ENCODE measurements at regions of chr2 and their contacts with region 1.

Region 1: GRCh38 chr2:173027181-173028128 is 48.2 kb upstream of the MAP3K20 start:
- DNase-seq: peak; percentile 87
- H3K4me3 ChIP-seq: no peak overlapping the region
- H3K27ac ChIP-seq: no peak overlapping the region
- H3K4me1 ChIP-seq: no peaks in the 10 kb centered on the region
- H3K27me3 ChIP-seq: peaks cover 0 to 2% of the 10 kb centered on the region in 2 experiments
- CTCF ChIP-seq: peak; percentile 73 to 85
- POLR2A ChIP-seq: no peak

Region 2: DNA sequence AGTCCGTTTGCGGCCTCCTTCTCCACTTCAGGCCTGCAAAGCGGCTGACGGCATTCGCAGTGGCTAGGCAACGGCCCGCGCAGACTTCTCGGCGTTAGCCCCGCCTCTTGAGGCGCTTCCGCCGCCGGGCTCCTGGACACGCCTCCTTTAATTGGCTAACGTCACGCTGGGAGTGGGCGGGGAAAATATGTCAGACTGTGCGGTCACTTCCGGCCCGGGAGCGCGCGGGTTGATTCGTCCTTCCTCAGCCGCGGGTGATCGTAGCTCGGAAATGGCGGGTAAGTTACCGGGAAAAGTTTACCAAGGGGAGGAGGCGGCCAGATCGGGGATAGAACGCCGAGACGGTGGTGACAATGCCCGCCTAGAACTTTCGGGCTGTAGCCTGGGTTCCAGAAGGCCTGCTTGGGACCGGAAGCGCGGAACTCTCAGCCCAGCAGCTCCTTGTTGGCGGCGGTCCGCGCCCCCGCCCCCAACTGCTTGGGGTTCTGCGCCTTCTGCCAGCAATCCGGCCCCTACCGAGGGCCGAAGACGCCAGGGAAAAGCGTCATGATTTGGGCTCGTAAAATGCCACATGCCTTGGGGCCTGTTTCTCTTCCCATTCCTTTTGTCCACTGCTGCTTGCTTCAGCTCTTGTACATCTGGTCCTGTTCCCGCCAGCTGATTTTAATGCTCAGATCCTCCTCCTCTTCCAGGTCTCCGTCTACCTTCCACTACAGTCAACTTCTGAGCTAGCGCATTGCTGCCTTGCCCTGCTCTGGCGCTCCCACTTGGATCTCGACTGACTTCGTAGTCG is 1105.0 kb before region 1 on chr2 and contains the start of gene HAT1:
- CTCF ChIA-PET with region 1: no interaction called
- POLR2A ChIA-PET with region 1: no interaction called
- dilution Hi-C with region 1: no loop called
- intact Hi-C with region 1: no loop called
- DNase-seq: peak; percentile 99
- H3K4me3 ChIP-seq: peak within 1 kb of the TSS; percentile 32 to 79 (median 57)
- H3K27ac ChIP-seq: peak within 1 kb of the TSS; percentile 77
- H3K4me1 ChIP-seq: peaks cover 13% of the 10 kb centered on the region
- H3K27me3 ChIP-seq: no peaks in the 10 kb centered on the region
- CTCF ChIP-seq: no peak
- POLR2A ChIP-seq: peak; percentile 59
- total RNA-seq, gene HAT1: 49.7 and 50.3 TPM in 2 replicates

Region 3: GRCh38 chr2:172931918-172932520 is 95.4 kb before region 1 on chr2:
- CTCF ChIA-PET with region 1: interaction called, 34 read pairs
- POLR2A ChIA-PET with region 1: no interaction called
- dilution Hi-C with region 1: no loop called
- intact Hi-C with region 1: loop called (anchors 2 kb)
- DNase-seq: peak; percentile 81
- H3K4me3 ChIP-seq: peak overlapping the region in 1 of 3 experiments; percentile 25
- H3K27ac ChIP-seq: peak overlapping the region; percentile 94
- H3K4me1 ChIP-seq: peaks cover 39% of the 10 kb centered on the region
- H3K27me3 ChIP-seq: no peaks in the 10 kb centered on the region
- CTCF ChIP-seq: peak; percentile 39 to 62
- POLR2A ChIP-seq: no peak

Region 4: GRCh38 chr2:173075781-173076580 is 48.5 kb after region 1 on chr2 and contains the start of gene MAP3K20:
- CTCF ChIA-PET with region 1: interaction called, 13 read pairs
- POLR2A ChIA-PET with region 1: no interaction called
- dilution Hi-C with region 1: no loop called
- intact Hi-C with region 1: no loop called
- DNase-seq: peak; percentile 70
- H3K4me3 ChIP-seq: peak within 1 kb of the TSS; percentile 54 to 86 (median 56)
- H3K27ac ChIP-seq: peak within 1 kb of the TSS; percentile 78
- H3K4me1 ChIP-seq: peaks cover 15% of the 10 kb centered on the region
- H3K27me3 ChIP-seq: no peaks in the 10 kb centered on the region
- CTCF ChIP-seq: peak; percentile 17 to 48
- POLR2A ChIP-seq: peak; percentile 54
- total RNA-seq, gene MAP3K20: 31.5 and 32.0 TPM in 2 replicates

Region 5: GRCh38 chr2:173157676-173158293 is 130.3 kb after region 1 on chr2:
- CTCF ChIA-PET with region 1: interaction called, 20 read pairs
- POLR2A ChIA-PET with region 1: no interaction called
- dilution Hi-C with region 1: no loop called
- intact Hi-C with region 1: no loop called
- DNase-seq: no peak
- H3K4me3 ChIP-seq: no peak overlapping the region
- H3K27ac ChIP-seq: no peak overlapping the region
- H3K4me1 ChIP-seq: peaks cover 4% of the 10 kb centered on the region
- H3K27me3 ChIP-seq: no peaks in the 10 kb centered on the region
- CTCF ChIP-seq: no peak
- POLR2A ChIP-seq: no peak

Region 6: GRCh38 chr2:173402405-173402974 is 375.0 kb after region 1 on chr2:
- CTCF ChIA-PET with region 1: interaction called, 12 read pairs
- POLR2A ChIA-PET with region 1: no interaction called
- dilution Hi-C with region 1: no loop called
- intact Hi-C with region 1: loop called (anchors 2 kb)
- DNase-seq: peak; percentile 73
- H3K4me3 ChIP-seq: no peak overlapping the region
- H3K27ac ChIP-seq: no peak overlapping the region
- H3K4me1 ChIP-seq: no peaks in the 10 kb centered on the region
- H3K27me3 ChIP-seq: peaks cover 49 to 61% of the 10 kb centered on the region in 2 experiments
- CTCF ChIP-seq: peak; percentile 85 to 88
- POLR2A ChIP-seq: no peak